ENCODE measurements at regions of chr2 and their contacts with region 1.

Region 1: GRCh38 chr2:113876503-113877387 is 13.1 kb upstream of the ACTR3 start:
- DNase-seq: peak; percentile 85
- H3K4me3 Mint-ChIP-seq: peak overlapping the region; percentile 43
- H3K27ac Mint-ChIP-seq: peak overlapping the region; percentile 85
- H3K4me1 Mint-ChIP-seq: peaks cover 69% of the 10 kb centered on the region
- H3K27me3 Mint-ChIP-seq: no peaks in the 10 kb centered on the region

Region 2: GRCh38 chr2:113756355-113757137 is 120.2 kb before region 1 on chr2 and contains the start of gene SLC35F5:
- CTCF ChIA-PET with region 1: interaction called, 15 read pairs
- DNase-seq: peak; percentile 92
- H3K4me3 Mint-ChIP-seq: peak within 1 kb of the TSS; percentile 97
- H3K27ac Mint-ChIP-seq: peak within 1 kb of the TSS; percentile 100
- H3K4me1 Mint-ChIP-seq: peaks cover 30% of the 10 kb centered on the region
- H3K27me3 Mint-ChIP-seq: peaks cover 4% of the 10 kb centered on the region

Region 3: GRCh38 chr2:113889471-113890252 is 12.9 kb after region 1 on chr2 and contains the start of gene ACTR3:
- CTCF ChIA-PET with region 1: interaction called, 21 read pairs
- DNase-seq: peak; percentile 99
- H3K4me3 Mint-ChIP-seq: peak within 1 kb of the TSS; percentile 94
- H3K27ac Mint-ChIP-seq: peak within 1 kb of the TSS; percentile 98
- H3K4me1 Mint-ChIP-seq: peaks cover 75% of the 10 kb centered on the region
- H3K27me3 Mint-ChIP-seq: no peaks in the 10 kb centered on the region